IMR-90 (cell line): ENCODE measurements at regions of chr4 and their contacts with region 1.

Region 1: DNA sequence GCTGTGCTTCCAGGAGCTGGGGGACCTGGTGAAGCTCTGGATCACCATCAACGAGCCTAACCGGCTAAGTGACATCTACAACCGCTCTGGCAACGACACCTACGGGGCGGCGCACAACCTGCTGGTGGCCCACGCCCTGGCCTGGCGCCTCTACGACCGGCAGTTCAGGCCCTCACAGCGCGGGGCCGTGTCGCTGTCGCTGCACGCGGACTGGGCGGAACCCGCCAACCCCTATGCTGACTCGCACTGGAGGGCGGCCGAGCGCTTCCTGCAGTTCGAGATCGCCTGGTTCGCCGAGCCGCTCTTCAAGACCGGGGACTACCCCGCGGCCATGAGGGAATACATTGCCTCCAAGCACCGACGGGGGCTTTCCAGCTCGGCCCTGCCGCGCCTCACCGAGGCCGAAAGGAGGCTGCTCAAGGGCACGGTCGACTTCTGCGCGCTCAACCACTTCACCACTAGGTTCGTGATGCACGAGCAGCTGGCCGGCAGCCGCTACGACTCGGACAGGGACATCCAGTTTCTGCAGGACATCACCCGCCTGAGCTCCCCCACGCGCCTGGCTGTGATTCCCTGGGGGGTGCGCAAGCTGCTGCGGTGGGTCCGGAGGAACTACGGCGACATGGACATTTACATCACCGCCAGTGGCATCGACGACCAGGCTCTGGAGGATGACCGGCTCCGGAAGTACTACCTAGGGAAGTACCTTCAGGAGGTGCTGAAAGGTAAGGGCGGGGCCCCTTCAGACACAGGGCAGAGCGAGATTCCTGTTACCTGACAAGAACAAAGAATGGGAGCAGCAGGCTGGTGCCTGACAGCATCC is 11.8 kb downstream of the RPL9 start:
- DNase-seq: peak; percentile 28
- ATAC-seq: peak; percentile 50
- H3K4me3 ChIP-seq: peak overlapping the region; percentile 17; the same call in 1 of the 2 replicates
- H3K27ac ChIP-seq: no peak overlapping the region
- H3K4me1 ChIP-seq: peaks cover 4% of the 10 kb centered on the region; the same call in 1 of the 2 replicates
- H3K27me3 ChIP-seq: no peaks in the 10 kb centered on the region; the same call in 1 of the 2 replicates
- CTCF ChIP-seq: 0 out of 2 replicates have a peak, but pooled peaks have one; percentile 10
- POLR2A ChIP-seq: no peak
- RAD21 ChIP-seq: no peak

Region 2: DNA sequence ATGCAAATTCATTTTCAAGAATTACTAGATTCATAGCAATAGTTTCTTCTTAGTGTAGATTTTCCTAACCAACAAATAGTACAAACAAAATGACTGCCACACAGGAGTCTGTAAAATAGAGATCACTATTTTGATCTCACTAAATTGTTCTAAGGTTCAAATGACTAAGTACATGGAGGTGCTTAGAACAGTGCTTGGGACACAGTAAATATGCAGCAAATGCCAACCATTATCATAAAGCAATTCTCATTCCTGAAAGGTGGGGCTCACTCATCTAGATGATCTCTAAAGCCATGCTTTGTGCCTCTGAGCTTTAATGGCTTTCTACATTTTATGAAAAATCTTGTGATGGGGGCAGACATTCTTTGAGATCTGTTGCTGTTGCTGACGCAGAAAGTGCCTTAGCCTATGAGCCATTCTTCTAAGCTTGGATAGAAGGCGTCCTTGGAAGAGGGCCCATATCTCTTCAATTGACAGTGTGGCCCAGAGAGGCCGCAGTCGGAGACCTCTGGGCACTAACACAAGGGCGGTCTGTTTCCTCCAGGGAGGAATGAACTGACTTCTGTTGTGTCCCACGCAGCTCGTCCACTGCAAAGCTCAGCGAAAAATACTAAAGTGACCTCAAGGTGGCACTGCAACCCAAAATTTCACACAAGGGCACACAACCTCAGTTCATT is 687.7 kb before region 1 on chr4:
- CTCF ChIA-PET with region 1: no interaction called
- POLR2A ChIA-PET with region 1: no interaction called
- dilution Hi-C with region 1: no loop called
- in situ Hi-C with region 1: no loop called
- intact Hi-C with region 1: loop called (anchors 10 kb)
- DNase-seq: peak; percentile 80
- ATAC-seq: peak; percentile 95
- H3K4me3 ChIP-seq: no peak overlapping the region
- H3K27ac ChIP-seq: no peak overlapping the region
- H3K4me1 ChIP-seq: no peaks in the 10 kb centered on the region
- H3K27me3 ChIP-seq: no peaks in the 10 kb centered on the region
- CTCF ChIP-seq: peak; percentile 83
- POLR2A ChIP-seq: no peak
- RAD21 ChIP-seq: peak; percentile 83

Region 3: GRCh38 chr4:39429476-39430334 is 17.3 kb before region 1 on chr4:
- CTCF ChIA-PET with region 1: interaction called, 5 read pairs
- POLR2A ChIA-PET with region 1: interaction called, 15 read pairs
- dilution Hi-C with region 1: no loop called
- in situ Hi-C with region 1: no loop called
- intact Hi-C with region 1: no loop called
- DNase-seq: no peak
- ATAC-seq: no peak
- H3K4me3 ChIP-seq: no peak overlapping the region
- H3K27ac ChIP-seq: no peak overlapping the region
- H3K4me1 ChIP-seq: no peaks in the 10 kb centered on the region
- H3K27me3 ChIP-seq: peaks cover 4% of the 10 kb centered on the region; the same call in 1 of the 2 replicates
- CTCF ChIP-seq: no peak
- POLR2A ChIP-seq: no peak
- RAD21 ChIP-seq: no peak

Region 4: GRCh38 chr4:39621582-39621981 is 174.6 kb after region 1 on chr4:
- CTCF ChIA-PET with region 1: no interaction called
- POLR2A ChIA-PET with region 1: interaction called, 15 read pairs
- dilution Hi-C with region 1: no loop called
- in situ Hi-C with region 1: no loop called
- intact Hi-C with region 1: no loop called
- DNase-seq: peak; percentile 81
- ATAC-seq: peak; percentile 76
- H3K4me3 ChIP-seq: no peak overlapping the region
- H3K27ac ChIP-seq: peak overlapping the region; percentile 65
- H3K4me1 ChIP-seq: peaks cover 6% of the 10 kb centered on the region
- H3K27me3 ChIP-seq: no peaks in the 10 kb centered on the region
- CTCF ChIP-seq: no peak
- POLR2A ChIP-seq: no peak
- RAD21 ChIP-seq: no peak